ENCODE measurements at regions of chr16 and their contacts with region 1.

Region 1: GRCh38 chr16:61887903-61888302 is 148.3 kb downstream of the CDH8 start:
- DNase-seq: peak in 2 of 5 donors; percentile 24 to 29
- ATAC-seq: peak in 2 of 4 donors; percentile 38 to 52
- H3K4me3 ChIP-seq: no peak overlapping the region
- H3K27ac ChIP-seq: no peak overlapping the region
- H3K4me1 ChIP-seq: no peaks in the 10 kb centered on the region
- H3K27me3 ChIP-seq: no peaks in the 10 kb centered on the region
- CTCF ChIP-seq: no peak
- POLR2A ChIP-seq: no peak

Region 2: DNA sequence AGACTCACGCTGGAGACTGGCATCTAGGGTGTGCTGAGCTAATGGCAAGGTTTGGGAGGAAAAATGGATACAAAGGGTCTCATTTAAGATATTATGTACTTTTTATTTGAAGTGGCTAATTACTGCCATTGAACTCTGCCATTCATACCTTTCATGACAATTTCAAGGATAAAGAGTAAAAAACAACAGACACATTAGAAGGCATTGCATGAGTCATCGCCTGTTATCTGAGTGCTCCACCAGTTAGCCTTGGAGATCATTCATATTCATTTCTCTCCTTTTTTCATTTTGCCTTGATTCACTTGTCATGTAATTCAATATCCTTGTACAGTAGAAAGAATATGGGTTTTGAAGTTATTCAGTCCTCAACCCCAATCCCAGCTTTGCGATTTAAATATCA is 38.9 kb after region 1 on chr16:
- intact Hi-C with region 1: no loop called
- DNase-seq: no peak
- ATAC-seq: no peak
- H3K4me3 ChIP-seq: no peak overlapping the region
- H3K27ac ChIP-seq: no peak overlapping the region
- H3K4me1 ChIP-seq: no peaks in the 10 kb centered on the region
- H3K27me3 ChIP-seq: no peaks in the 10 kb centered on the region
- CTCF ChIP-seq: no peak
- POLR2A ChIP-seq: no peak

Region 3: GRCh38 chr16:61946019-61946418 is 58.1 kb after region 1 on chr16:
- intact Hi-C with region 1: loop called in 1 of 10 experiments (anchors 10 kb)
- DNase-seq: no peak
- ATAC-seq: no peak
- H3K4me3 ChIP-seq: no peak overlapping the region
- H3K27ac ChIP-seq: no peak overlapping the region
- H3K4me1 ChIP-seq: no peaks in the 10 kb centered on the region
- H3K27me3 ChIP-seq: no peaks in the 10 kb centered on the region
- CTCF ChIP-seq: no peak
- POLR2A ChIP-seq: no peak

Measured in heart left ventricle (tissue), 16 donors.